ENCODE measurements at regions of chr10 and their contacts with region 1.

Region 1: GRCh38 chr10:4733151-4733842 is 92.7 kb upstream of the AKR1E2 start:
- DNase-seq: no peak
- ATAC-seq: peak; percentile 69
- H3K4me3 ChIP-seq: no peak overlapping the region
- H3K27ac ChIP-seq: no peak overlapping the region
- H3K4me1 ChIP-seq: peaks cover 7 to 19% of the 10 kb centered on the region in 2 experiments; a peak in 3 of 4 replicates
- H3K27me3 ChIP-seq: no peaks in the 10 kb centered on the region
- CTCF ChIP-seq: no peak
- POLR2A ChIP-seq: no peak
- RAD21 ChIP-seq: no peak

Region 2: DNA sequence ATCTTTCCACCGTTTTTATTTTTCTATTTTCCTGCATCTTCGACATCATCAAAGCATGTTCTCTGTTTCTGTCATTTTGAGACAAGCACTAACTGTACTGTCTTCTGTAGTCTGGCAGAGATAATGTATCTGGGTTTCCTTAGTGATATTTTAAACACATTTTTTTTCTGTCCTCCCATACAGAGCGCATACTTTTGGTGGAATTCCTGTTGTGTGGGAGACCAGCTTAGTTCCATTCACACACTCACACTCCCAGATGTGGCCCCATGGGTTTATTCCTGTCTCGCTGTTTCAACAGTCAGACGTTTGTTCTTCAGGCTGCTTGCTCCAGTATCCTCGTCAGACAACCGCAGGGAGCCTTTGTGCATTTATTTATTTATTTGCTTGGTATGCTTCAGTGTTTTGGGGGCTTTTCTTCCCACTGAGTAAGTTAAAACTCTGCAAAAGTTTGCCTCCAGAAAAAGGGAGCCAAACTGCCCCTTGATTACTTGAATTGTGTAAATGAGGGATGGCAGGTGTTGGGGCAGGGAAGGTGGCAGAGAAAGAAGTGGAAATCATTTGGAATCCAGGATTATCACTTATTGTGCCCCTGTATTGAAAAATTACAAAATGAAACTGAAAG is 491.5 kb before region 1 on chr10:
- CTCF ChIA-PET with region 1: no interaction called
- POLR2A ChIA-PET with region 1: no interaction called
- RAD21 ChIA-PET with region 1: no interaction called
- intact Hi-C with region 1: no loop called
- DNase-seq: no peak
- ATAC-seq: 0 out of 2 replicates have a peak, but pooled peaks have one; percentile 4
- H3K4me3 ChIP-seq: 0 out of 4 replicates have a peak overlapping the region, but pooled peaks of 1 of the 2 experiments have one; percentile 40
- H3K27ac ChIP-seq: no peak overlapping the region
- H3K4me1 ChIP-seq: peaks cover 17 to 44% of the 10 kb centered on the region in 2 experiments
- H3K27me3 ChIP-seq: no peaks in the 10 kb centered on the region
- CTCF ChIP-seq: no peak
- POLR2A ChIP-seq: no peak
- RAD21 ChIP-seq: no peak

Region 3: GRCh38 chr10:4353964-4354363 is 379.3 kb before region 1 on chr10:
- CTCF ChIA-PET with region 1: no interaction called
- POLR2A ChIA-PET with region 1: no interaction called
- RAD21 ChIA-PET with region 1: no interaction called
- intact Hi-C with region 1: loop called (anchors 10 kb)
- DNase-seq: peak; percentile 26
- ATAC-seq: peak; percentile 51
- H3K4me3 ChIP-seq: peak overlapping the region; percentile 1 to 47; a peak in 3 of 4 replicates
- H3K27ac ChIP-seq: peak overlapping the region; percentile 64
- H3K4me1 ChIP-seq: peaks cover 25 to 34% of the 10 kb centered on the region in 2 experiments
- H3K27me3 ChIP-seq: no peaks in the 10 kb centered on the region
- CTCF ChIP-seq: no peak
- POLR2A ChIP-seq: no peak
- RAD21 ChIP-seq: 0 out of 2 replicates have a peak, but pooled peaks have one; percentile 11

Region 4: DNA sequence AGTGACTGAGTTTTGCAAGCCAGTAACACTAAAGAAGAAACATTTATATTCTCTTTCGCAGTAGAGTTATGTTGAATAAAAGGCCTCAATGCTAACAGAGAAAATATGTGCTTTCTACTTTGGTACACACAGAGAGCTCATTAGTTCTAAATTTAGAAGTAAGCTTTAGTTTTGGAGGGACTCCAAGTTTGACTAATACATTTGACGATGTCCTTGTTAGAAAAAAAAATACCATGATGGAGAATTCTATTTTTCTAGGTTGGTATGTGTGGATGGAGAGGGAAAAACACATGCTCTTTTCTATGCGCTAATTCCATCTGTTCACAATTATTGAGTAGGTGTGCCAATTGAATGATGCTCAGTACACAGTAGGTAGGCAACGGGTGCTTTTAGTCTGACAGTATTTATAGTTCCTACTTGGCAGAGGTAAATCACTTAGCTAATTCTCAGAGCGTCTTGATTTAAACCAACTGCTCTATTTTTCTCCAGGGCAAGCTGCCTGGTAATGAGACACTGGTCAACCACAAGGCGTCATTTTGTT is 234.5 kb before region 1 on chr10:
- CTCF ChIA-PET with region 1: no interaction called
- POLR2A ChIA-PET with region 1: no interaction called
- RAD21 ChIA-PET with region 1: no interaction called
- intact Hi-C with region 1: no loop called
- DNase-seq: no peak
- ATAC-seq: no peak
- H3K4me3 ChIP-seq: no peak overlapping the region
- H3K27ac ChIP-seq: no peak overlapping the region
- H3K4me1 ChIP-seq: peaks cover 0 to 10% of the 10 kb centered on the region in 2 experiments; a peak in 1 of 4 replicates
- H3K27me3 ChIP-seq: no peaks in the 10 kb centered on the region
- CTCF ChIP-seq: no peak
- POLR2A ChIP-seq: no peak
- RAD21 ChIP-seq: no peak

Region 5: GRCh38 chr10:4617589-4617988 is 115.7 kb before region 1 on chr10:
- CTCF ChIA-PET with region 1: no interaction called
- POLR2A ChIA-PET with region 1: no interaction called
- RAD21 ChIA-PET with region 1: no interaction called
- intact Hi-C with region 1: no loop called
- DNase-seq: no peak
- ATAC-seq: no peak
- H3K4me3 ChIP-seq: no peak overlapping the region
- H3K27ac ChIP-seq: no peak overlapping the region
- H3K4me1 ChIP-seq: no peaks in the 10 kb centered on the region
- H3K27me3 ChIP-seq: no peaks in the 10 kb centered on the region
- CTCF ChIP-seq: no peak
- POLR2A ChIP-seq: no peak
- RAD21 ChIP-seq: no peak